A673 (cell line): ENCODE measurements at regions of chr16 and their contacts with region 1.

Region 1: GRCh38 chr16:57167953-57168352 is 17.9 kb downstream of the PSME3IP1 start:
- DNase-seq: peak; percentile 82
- H3K4me3 ChIP-seq: no peak overlapping the region
- H3K27ac ChIP-seq: no peak overlapping the region
- H3K4me1 ChIP-seq: peaks cover 15% of the 10 kb centered on the region
- H3K27me3 ChIP-seq: no peaks in the 10 kb centered on the region
- CTCF ChIP-seq: peak; percentile 79

Region 2: DNA sequence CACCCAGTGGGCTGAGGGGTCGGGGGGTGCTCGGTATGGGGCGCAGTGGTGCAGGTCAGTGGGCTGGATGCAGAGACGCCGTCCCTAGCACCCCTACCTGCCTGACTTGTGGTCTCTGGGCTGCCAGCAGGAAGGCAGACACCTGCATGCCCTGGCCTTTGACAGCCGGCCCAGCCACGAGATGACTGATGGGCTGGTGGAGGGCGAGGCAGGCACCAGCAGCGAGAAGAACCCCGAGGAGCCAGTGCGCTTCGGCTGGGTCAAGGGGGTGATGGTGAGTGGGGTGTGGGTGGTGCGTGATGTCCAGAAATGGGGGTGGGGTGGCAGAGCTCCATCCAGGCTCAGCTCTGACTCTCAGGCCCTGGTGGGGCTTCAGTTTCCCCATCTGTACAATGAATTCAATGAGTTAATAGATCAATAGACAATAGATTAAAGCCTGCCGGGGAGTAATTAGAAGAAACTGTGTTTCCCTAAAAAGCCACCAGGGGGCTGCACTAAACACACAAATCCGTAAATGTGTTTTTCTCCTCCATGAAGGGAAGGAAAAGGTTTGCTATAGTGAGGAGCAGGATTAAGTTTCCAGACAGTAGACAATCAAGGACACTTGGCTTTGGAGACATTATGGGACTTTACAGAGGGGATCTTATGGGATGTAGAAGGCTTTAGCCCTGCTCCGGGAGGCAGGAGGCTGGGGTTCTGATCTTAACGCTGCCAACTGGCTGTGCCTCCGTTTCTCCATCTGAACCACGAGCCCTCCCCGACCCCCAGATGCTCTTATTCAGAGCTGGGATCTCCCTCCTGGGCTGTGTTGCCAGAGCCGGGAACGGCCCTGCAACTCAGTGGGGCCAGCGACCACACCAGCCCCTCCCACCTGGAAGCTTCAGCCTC is 300.8 kb before region 1 on chr16:
- CTCF ChIA-PET with region 1: no interaction called
- POLR2A ChIA-PET with region 1: no interaction called
- intact Hi-C with region 1: loop called (anchors 5 kb)
- DNase-seq: peak; percentile 75
- H3K4me3 ChIP-seq: no peak overlapping the region
- H3K27ac ChIP-seq: no peak overlapping the region
- H3K4me1 ChIP-seq: no peaks in the 10 kb centered on the region
- H3K27me3 ChIP-seq: no peaks in the 10 kb centered on the region
- CTCF ChIP-seq: peak; percentile 79

Region 3: GRCh38 chr16:56964243-56965148 is 203.5 kb before region 1 on chr16:
- CTCF ChIA-PET with region 1: no interaction called
- POLR2A ChIA-PET with region 1: no interaction called
- intact Hi-C with region 1: loop called (anchors 1 kb)
- DNase-seq: peak; percentile 92
- H3K4me3 ChIP-seq: no peak overlapping the region
- H3K27ac ChIP-seq: no peak overlapping the region
- H3K4me1 ChIP-seq: peaks cover 4% of the 10 kb centered on the region
- H3K27me3 ChIP-seq: no peaks in the 10 kb centered on the region
- CTCF ChIP-seq: peak; percentile 99

Region 4: DNA sequence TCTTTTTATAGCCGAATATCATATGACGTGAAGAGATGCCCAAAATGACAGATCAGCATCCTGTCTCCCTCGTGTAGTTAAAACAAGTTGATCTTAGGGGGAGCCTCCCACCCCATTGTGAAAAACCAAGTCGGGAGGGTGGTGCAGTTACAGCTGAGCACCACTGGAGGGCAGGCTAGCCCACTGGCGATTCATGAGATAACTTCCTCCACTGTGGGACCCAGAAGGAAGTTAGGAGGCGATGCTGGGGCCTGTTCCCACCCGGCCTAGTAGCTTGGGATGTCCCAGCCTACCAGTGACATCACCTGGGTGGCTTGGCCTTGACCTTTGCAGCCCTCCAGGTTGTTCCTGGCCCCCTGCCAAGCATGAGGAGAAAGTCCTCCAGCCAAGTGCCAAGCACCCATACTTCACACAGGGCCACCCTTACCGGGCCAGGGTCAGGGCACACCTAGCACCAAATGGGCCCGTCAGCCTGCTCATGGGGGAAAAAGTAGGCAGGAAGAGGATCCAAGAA is 83.6 kb before region 1 on chr16:
- CTCF ChIA-PET with region 1: interaction called, 4 read pairs
- POLR2A ChIA-PET with region 1: no interaction called
- intact Hi-C with region 1: loop called (anchors 1 kb)
- DNase-seq: peak; percentile 87
- H3K4me3 ChIP-seq: no peak overlapping the region
- H3K27ac ChIP-seq: no peak overlapping the region
- H3K4me1 ChIP-seq: no peaks in the 10 kb centered on the region
- H3K27me3 ChIP-seq: no peaks in the 10 kb centered on the region
- CTCF ChIP-seq: peak; percentile 98

Region 5: DNA sequence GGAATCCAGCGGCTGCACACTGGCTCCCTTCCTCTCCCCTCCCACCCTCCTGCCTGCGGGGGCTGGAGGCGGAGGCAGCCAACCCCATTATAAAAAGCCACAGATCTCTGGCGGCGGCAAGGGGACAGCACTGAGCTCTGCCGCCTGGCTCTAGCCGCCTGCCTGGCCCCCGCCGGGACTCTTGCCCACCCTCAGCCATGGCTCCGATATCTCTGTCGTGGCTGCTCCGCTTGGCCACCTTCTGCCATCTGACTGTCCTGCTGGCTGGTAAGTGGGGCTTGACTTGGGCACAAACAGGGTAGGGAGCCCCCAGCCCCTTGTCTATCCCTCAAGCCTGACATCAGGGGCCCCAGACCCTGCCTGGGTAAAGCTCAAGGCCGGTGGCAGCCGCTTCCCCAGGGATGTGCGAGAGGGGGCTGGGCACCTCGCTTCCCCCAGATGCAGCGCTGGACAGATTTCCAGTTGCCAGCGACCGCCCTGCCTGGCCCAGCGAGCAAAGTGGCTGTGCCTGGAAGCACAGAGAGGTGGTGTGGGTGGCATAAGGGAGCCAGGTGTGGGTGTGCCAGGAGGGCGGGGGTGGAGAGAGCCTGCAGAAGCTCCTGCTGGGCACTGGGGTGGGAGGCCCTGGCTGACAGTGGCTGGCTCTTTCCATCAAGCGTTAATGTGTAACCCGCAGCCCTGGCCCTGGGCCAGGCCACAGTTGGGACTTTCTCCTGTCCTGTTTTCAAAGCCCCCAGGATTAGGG is 204.6 kb after region 1 on chr16 and contains the start of gene CX3CL1:
- CTCF ChIA-PET with region 1: no interaction called
- POLR2A ChIA-PET with region 1: no interaction called
- intact Hi-C with region 1: no loop called
- DNase-seq: peak; percentile 61
- H3K4me3 ChIP-seq: no peak within 1 kb of the TSS
- H3K27ac ChIP-seq: no peak within 1 kb of the TSS
- H3K4me1 ChIP-seq: peaks cover 7% of the 10 kb centered on the region
- H3K27me3 ChIP-seq: no peaks in the 10 kb centered on the region
- CTCF ChIP-seq: no peak
- total RNA-seq, gene CX3CL1: 0.15 TPM in 1 of 2 replicates, not detected in the other

Region 6: GRCh38 chr16:58236231-58236690 is 1068.3 kb after region 1 on chr16:
- CTCF ChIA-PET with region 1: no interaction called
- POLR2A ChIA-PET with region 1: no interaction called
- intact Hi-C with region 1: no loop called
- DNase-seq: peak; percentile 84
- H3K4me3 ChIP-seq: peak overlapping the region; percentile 35
- H3K27ac ChIP-seq: no peak overlapping the region
- H3K4me1 ChIP-seq: no peaks in the 10 kb centered on the region
- H3K27me3 ChIP-seq: peaks cover 39% of the 10 kb centered on the region
- CTCF ChIP-seq: no peak